ENCODE measurements at regions of chr3 and their contacts with region 1.

Region 1: GRCh38 chr3:49007068-49007770 is at the start of gene WDR6:
- DNase-seq: peak; percentile 96
- H3K4me3 ChIP-seq: peak within 1 kb of the TSS; percentile 66 to 94 (median 92)
- H3K27ac ChIP-seq: peak within 1 kb of the TSS; percentile 99
- H3K4me1 ChIP-seq: peaks cover 0 to 12% (median 6%) of the 10 kb centered on the region in 4 experiments; a peak in 5 of 7 replicates
- H3K27me3 ChIP-seq: no peaks in the 10 kb centered on the region
- CTCF ChIP-seq: peak in 1 of 3 experiments; percentile 34; a peak in 2 of 4 replicates
- EP300 ChIP-seq: no peak
- POLR2A ChIP-seq: peak in 1 of 2 experiments; percentile 95; a peak in 2 of 3 replicates
- RAD21 ChIP-seq: no peak
- total RNA-seq, gene WDR6: 180 and 187 TPM in 2 replicates

Region 2: DNA sequence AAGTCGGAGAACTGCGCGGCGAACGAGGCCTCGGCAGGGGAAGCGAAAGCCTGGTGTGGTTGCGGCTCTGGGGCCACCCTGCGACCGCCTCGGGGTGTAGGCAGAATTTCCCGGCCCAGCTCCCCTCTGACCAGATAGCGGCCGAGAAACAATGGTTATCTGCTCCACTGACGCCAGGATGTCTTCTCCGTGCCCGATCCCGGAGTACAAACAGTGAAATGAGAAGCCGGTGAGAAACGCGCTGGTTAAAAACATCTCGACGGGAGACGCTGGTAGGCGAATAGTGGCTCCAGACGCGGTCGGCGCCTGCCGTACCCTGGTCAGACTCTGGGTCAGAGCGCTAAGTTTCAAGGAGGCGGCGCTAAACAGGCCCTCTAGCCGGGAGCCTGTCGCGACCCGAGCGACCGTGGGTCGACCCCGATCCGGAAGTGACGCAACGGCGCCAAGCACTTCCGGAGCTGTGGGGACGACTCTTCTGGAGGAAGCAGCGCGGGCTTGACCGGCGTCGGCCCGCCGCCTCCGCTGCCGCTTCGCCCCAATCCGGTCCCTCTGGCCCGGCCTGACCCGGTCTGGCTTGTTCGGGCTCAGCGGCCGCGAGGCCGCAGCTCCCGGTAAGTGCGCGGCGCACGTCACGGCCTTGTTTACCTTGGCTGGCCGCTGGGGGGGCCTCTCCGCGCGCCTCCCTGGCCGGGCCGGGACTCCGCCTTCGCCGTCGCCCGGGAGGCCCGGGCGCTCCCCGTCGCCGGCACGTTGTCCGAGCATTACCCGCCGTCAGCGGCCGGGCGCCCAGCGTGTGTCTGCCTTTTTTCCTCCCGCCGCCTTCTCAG is 88.6 kb before region 1 on chr3 and contains the start of gene ARIH2:
- CTCF ChIA-PET with region 1: no interaction called
- POLR2A ChIA-PET with region 1: interaction called, 10 read pairs
- DNase-seq: peak; percentile 68 to 90
- H3K4me3 ChIP-seq: peak within 1 kb of the TSS; percentile 65 to 97 (median 88)
- H3K27ac ChIP-seq: peak within 1 kb of the TSS; percentile 75
- H3K4me1 ChIP-seq: peaks cover 0 to 3% (median 1%) of the 10 kb centered on the region in 4 experiments; a peak in 2 of 7 replicates
- H3K27me3 ChIP-seq: no peaks in the 10 kb centered on the region
- CTCF ChIP-seq: 0 out of 4 replicates have a peak, but pooled peaks of 1 of the 3 experiments have one; percentile 1
- EP300 ChIP-seq: no peak
- POLR2A ChIP-seq: peak in 1 of 2 experiments; percentile 88; a peak in 2 of 3 replicates
- RAD21 ChIP-seq: peak in 1 of 2 experiments; percentile 9; a peak in 1 of 4 replicates
- total RNA-seq, gene ARIH2: 121 and 136 TPM in 2 replicates

Region 3: DNA sequence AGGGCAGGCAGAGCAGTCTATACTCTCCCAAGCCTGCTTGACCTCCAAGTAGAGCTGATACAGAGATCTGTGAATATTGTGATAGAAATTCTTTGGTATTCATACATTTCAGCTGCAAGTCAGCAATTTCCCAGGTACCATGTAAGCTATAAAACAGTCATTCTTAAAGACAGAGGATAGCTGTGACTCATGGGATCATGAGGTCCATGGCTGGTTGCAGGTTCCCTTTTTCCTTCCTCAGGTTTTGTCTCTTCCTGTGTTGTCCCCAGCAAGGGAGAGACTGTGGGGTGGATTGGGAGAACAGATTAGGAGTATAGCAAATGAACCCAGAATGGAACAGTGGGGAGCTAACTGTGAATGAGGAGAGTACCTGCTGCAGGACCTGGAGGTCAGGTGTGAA is 22.6 kb before region 1 on chr3:
- CTCF ChIA-PET with region 1: interaction called, 467 read pairs
- POLR2A ChIA-PET with region 1: interaction called, 1,518 read pairs
- DNase-seq: no peak
- H3K4me3 ChIP-seq: no peak overlapping the region
- H3K27ac ChIP-seq: no peak overlapping the region
- H3K4me1 ChIP-seq: peaks cover 0 to 7% (median 6%) of the 10 kb centered on the region in 4 experiments; a peak in 3 of 7 replicates
- H3K27me3 ChIP-seq: no peaks in the 10 kb centered on the region
- CTCF ChIP-seq: no peak
- EP300 ChIP-seq: no peak
- POLR2A ChIP-seq: no peak
- RAD21 ChIP-seq: no peak

Region 4: DNA sequence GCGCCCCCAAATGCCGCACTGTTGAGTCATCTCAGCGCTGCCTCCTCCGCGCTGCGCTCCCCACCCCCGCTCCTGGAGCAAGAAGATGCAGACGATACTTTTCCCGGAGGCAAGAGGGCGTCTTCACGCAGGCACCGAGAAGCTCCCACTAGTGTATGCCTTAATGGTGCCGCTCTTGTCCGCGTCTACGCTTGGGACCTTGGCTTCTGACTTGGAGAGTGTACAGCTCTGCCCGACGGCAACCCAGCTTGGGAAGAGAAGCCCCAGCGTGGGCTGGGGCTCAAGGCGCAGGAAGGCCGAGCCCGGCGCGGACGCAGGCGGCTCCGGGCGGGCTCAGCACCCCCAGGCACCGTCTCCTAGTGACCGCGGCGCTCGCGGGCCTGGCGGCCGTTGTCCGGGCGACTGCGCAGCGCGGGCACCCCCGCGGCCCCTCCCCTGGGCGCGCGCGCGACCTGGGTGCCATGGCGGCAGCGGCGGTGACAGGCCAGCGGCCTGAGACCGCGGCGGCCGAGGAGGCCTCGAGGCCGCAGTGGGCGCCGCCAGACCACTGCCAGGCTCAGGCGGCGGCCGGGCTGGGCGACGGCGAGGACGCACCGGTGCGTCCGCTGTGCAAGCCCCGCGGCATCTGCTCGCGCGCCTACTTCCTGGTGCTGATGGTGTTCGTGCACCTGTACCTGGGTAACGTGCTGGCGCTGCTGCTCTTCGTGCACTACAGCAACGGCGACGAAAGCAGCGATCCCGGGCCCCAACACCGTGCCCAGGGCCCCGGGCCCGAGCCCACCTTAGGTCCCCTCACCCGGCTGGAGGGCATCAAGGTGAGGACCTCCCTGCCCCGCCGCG is 17.2 kb before region 1 on chr3 and contains the start of gene P4HTM:
- CTCF ChIA-PET with region 1: interaction called, 467 read pairs
- POLR2A ChIA-PET with region 1: interaction called, 1,518 read pairs
- DNase-seq: peak; percentile 63 to 84
- H3K4me3 ChIP-seq: peak within 1 kb of the TSS; percentile 66 to 83 (median 76)
- H3K27ac ChIP-seq: peak within 1 kb of the TSS; percentile 87
- H3K4me1 ChIP-seq: peaks cover 7 to 17% (median 10%) of the 10 kb centered on the region in 4 experiments; a peak in 5 of 7 replicates
- H3K27me3 ChIP-seq: no peaks in the 10 kb centered on the region
- CTCF ChIP-seq: peak in 1 of 3 experiments; percentile 40; a peak in 2 of 4 replicates
- EP300 ChIP-seq: no peak
- POLR2A ChIP-seq: peak in 1 of 2 experiments; percentile 64; a peak in 1 of 3 replicates
- RAD21 ChIP-seq: no peak
- total RNA-seq, gene P4HTM: 18.6 and 19.1 TPM in 2 replicates

Region 5: DNA sequence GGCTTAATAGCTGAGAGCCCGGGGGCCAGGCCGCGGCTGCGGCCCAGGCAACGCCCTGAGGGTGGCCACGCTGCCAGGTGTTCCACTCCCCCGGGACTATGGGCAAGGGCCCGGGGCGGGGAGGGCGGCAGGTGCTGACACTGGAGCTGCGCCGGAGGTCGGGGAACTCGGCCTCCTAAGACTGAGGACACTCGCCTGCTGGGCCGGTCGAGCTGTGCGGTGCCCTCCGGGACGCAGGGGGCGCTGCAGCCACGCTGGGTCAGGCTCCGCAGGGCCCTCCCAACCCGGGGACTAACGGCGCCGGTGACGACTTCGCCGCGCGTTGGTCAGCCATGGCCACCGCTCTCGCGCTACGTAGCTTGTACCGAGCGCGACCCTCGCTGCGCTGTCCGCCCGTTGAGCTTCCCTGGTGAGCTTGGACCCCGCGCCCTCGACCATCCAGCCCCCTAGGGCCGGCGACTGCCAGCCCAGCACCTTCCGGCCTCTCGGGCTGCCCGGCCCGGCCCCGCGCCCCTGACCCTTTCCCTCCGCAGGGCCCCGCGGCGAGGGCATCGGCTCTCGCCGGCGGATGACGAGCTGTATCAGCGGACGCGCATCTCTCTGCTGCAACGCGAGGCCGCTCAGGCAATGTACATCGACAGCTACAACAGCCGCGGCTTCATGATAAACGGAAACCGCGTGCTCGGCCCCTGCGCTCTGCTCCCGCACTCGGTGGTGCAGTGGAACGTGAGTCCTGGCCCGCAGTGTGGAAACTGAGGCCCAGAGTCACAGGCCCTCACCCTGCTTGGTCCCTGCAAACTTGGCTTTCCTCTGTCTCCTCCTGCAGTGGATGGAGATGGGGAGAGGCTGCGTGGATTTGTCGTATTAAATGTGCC is 14.8 kb after region 1 on chr3 and contains the start of gene NDUFAF3:
- CTCF ChIA-PET with region 1: interaction called, 51 read pairs
- POLR2A ChIA-PET with region 1: interaction called, 1,518 read pairs
- DNase-seq: peak; percentile 82 to 98
- H3K4me3 ChIP-seq: peak within 1 kb of the TSS; percentile 84 to 97 (median 95)
- H3K27ac ChIP-seq: peak within 1 kb of the TSS; percentile 91
- H3K4me1 ChIP-seq: peaks cover 0 to 21% (median 13%) of the 10 kb centered on the region in 4 experiments; a peak in 6 of 7 replicates
- H3K27me3 ChIP-seq: no peaks in the 10 kb centered on the region; a peak in 1 of 7 replicates
- CTCF ChIP-seq: peak in 2 of 3 experiments; percentile 87 to 96; a peak in 3 of 4 replicates
- EP300 ChIP-seq: no peak; a peak in 1 of 3 replicates
- POLR2A ChIP-seq: peak in 1 of 2 experiments; percentile 88; a peak in 2 of 3 replicates
- RAD21 ChIP-seq: peak; percentile 25 to 41; a peak in 3 of 4 replicates
- total RNA-seq, gene NDUFAF3: 26.2 and 27.8 TPM in 2 replicates

Region 6: DNA sequence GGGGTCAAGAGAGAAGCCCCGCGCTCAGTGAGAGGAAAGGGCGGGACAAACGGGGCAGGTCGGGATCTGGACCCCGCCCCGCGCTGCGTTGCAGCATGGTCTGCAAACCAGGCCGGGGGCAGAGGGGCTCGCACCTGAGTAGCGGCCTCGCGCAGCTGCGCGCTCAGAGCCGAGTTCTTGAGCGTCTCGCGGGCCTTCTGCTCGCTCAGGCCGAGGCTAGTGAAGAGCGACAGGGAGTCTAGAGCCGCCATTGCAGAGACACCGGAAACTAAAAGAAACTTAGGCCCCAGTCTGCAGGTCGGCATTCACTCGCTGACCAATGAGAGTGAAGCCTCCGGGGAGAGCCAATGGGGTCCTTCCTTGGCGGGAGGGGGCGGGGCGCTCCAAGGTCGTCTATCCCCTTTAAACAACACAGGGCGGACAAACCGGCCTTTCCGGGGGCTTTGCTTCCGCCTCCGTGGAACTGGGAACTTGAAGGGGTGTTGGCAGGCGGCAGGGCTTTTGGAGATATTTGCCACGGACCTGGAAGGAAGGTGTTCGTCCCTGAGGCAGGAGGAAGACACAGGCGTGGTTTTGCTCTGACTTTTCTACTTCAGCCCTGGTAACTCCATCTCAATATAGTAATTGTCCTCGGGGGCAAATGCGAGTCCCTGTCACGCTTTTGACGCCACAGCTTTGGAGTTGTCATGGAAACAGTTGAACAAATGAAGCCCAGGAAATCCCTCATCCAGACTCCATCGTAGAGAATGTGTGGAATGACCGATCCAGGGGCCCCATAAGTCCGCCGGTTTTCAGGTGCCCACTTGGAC is 97.5 kb after region 1 on chr3 and contains the start of gene QARS1:
- CTCF ChIA-PET with region 1: no interaction called
- POLR2A ChIA-PET with region 1: interaction called, 141 read pairs
- DNase-seq: peak; percentile 81 to 96
- H3K4me3 ChIP-seq: peak within 1 kb of the TSS; percentile 82 to 87 (median 84)
- H3K27ac ChIP-seq: peak within 1 kb of the TSS; percentile 96
- H3K4me1 ChIP-seq: peaks cover 0 to 9% (median 3%) of the 10 kb centered on the region in 4 experiments; a peak in 5 of 7 replicates
- H3K27me3 ChIP-seq: no peaks in the 10 kb centered on the region
- CTCF ChIP-seq: no peak
- EP300 ChIP-seq: peak in 1 of 2 experiments; percentile 44; a peak in 1 of 3 replicates
- POLR2A ChIP-seq: peak; percentile 74 to 91
- RAD21 ChIP-seq: no peak
- total RNA-seq, gene QARS1: 346 and 353 TPM in 2 replicates